Activated B cell treated with CpG ODN at 0.5 μM for 24 hours (primary cell): ENCODE measurements at regions of chr15 and their contacts with region 1.

Region 1: DNA sequence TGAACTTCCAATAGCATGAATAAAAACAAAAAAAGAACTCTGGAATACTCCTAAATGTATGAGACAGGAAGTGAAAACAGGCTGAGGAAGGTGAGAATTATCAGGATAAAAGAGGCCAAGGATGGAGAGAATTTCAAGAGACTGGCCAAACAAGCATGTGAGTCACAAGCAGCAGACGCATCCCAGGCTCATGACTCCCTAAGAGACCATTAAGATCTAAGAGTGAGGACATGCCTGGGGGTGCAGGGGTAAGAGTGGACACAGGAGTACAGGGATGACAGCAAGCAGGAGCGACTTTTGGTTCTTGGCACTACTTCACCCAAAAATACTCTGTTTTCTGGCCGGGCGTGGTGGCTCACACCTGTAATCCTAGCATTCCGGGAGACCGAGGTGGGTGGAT is 7.1 kb downstream of the SCAMP2 start:
- DNase-seq: no peak
- ATAC-seq: no peak
- H3K4me3 Mint-ChIP-seq: no peak overlapping the region
- H3K27ac Mint-ChIP-seq: peak overlapping the region; percentile 46
- H3K4me1 Mint-ChIP-seq: peaks cover 71% of the 10 kb centered on the region
- H3K27me3 Mint-ChIP-seq: no peaks in the 10 kb centered on the region
- CTCF ChIP-seq: no peak

Region 2: GRCh38 chr15:74896316-74896715 is 30.2 kb after region 1 on chr15:
- CTCF ChIA-PET with region 1: interaction called, 18 read pairs
- POLR2A ChIA-PET with region 1: interaction called, 13 read pairs
- intact Hi-C with region 1: no loop called
- DNase-seq: no peak
- ATAC-seq: no peak
- H3K4me3 Mint-ChIP-seq: no peak overlapping the region
- H3K27ac Mint-ChIP-seq: no peak overlapping the region
- H3K4me1 Mint-ChIP-seq: peaks cover 23% of the 10 kb centered on the region
- H3K27me3 Mint-ChIP-seq: no peaks in the 10 kb centered on the region
- CTCF ChIP-seq: no peak